ENCODE measurements at regions of chr20 and their contacts with region 1.

Region 1: DNA sequence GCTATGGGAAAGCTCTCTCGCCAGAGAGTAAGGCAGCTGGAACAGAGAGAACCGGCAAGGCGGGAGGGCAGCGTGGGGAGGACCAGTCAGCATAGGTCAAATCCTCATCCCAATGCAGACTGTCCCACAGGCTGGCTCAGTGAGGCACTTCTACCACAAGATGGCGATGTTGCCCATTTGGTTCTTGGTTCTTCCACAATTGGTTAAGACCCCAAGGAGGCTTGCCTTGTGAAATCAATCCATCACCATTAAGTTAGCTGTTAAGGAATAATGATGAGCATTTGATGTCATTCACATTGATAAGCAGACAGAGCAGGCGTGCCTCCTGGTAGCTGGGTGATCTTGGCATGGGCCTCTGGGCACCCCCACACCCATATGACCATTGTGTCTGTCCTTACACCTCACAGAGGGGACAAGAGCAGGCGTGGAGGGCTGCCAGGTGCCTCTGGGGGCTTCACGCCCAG is 2.4 kb downstream of the CSTL1 start:
- DNase-seq: peak; percentile 80
- H3K4me3 Mint-ChIP-seq: no peak overlapping the region
- H3K27ac Mint-ChIP-seq: no peak overlapping the region
- H3K4me1 Mint-ChIP-seq: no peaks in the 10 kb centered on the region
- H3K27me3 Mint-ChIP-seq: no peaks in the 10 kb centered on the region

Region 2: DNA sequence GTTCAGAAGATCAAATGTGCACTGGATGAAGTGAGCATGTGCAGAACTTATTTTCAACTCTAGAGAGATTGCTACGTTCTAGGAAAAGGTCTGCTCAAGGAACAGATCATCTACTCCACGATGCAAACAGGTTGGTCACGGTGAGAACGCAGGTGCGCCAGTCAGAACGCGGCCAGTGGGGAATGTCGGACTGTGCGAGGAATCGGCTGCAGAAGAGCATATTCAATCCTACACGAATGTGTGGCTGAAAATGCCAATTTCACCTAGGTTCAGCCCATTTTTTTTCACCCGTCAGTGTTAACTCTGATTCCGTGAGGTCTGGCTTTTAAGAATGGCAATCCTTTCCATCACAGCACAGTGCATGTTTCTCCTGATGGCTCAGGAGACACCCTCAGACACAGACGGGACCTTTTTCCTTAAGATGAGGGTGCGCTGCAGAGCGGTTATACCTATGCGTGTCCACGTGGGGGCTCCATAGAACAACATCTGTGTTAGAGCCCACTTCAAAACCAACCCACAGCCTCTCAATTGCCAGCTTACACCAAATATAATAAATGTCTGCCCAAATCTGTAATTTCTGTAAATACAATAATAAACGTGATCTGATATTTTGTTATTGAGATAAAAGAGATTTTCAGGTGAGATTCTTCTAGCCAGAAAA is 1107.9 kb before region 1 on chr20:
- CTCF ChIA-PET with region 1: no interaction called
- intact Hi-C with region 1: loop called (anchors 10 kb)
- DNase-seq: peak; percentile 55
- H3K4me3 Mint-ChIP-seq: no peak overlapping the region
- H3K27ac Mint-ChIP-seq: no peak overlapping the region
- H3K4me1 Mint-ChIP-seq: no peaks in the 10 kb centered on the region
- H3K27me3 Mint-ChIP-seq: peaks cover 10% of the 10 kb centered on the region

Region 3: GRCh38 chr20:22691369-22692118 is 750.3 kb before region 1 on chr20:
- CTCF ChIA-PET with region 1: interaction called, 3 read pairs
- intact Hi-C with region 1: loop called (anchors 5 kb)
- DNase-seq: peak; percentile 64
- H3K4me3 Mint-ChIP-seq: no peak overlapping the region
- H3K27ac Mint-ChIP-seq: no peak overlapping the region
- H3K4me1 Mint-ChIP-seq: no peaks in the 10 kb centered on the region
- H3K27me3 Mint-ChIP-seq: peaks cover 6% of the 10 kb centered on the region

Region 4: GRCh38 chr20:23606652-23607049 is 164.8 kb after region 1 on chr20:
- CTCF ChIA-PET with region 1: interaction called, 38 read pairs
- intact Hi-C with region 1: loop called (anchors 1 kb)
- DNase-seq: peak; percentile 77
- H3K4me3 Mint-ChIP-seq: no peak overlapping the region
- H3K27ac Mint-ChIP-seq: no peak overlapping the region
- H3K4me1 Mint-ChIP-seq: no peaks in the 10 kb centered on the region
- H3K27me3 Mint-ChIP-seq: peaks cover 6% of the 10 kb centered on the region

Measured in activated naive CD4-positive, alpha-beta T cell treated with anti-CD3 and anti-CD28 coated beads for 36 hours (primary cell).